IMR-90 (cell line): ENCODE measurements at regions of chr13 and their contacts with region 1.

Region 1: GRCh38 chr13:42110410-42111155 is 62.1 kb downstream of the DGKH start:
- DNase-seq: peak; percentile 82
- ATAC-seq: peak; percentile 67
- H3K4me3 ChIP-seq: no peak overlapping the region
- H3K27ac ChIP-seq: no peak overlapping the region
- H3K4me1 ChIP-seq: peaks cover 3% of the 10 kb centered on the region; the same call in 1 of the 2 replicates
- H3K27me3 ChIP-seq: no peaks in the 10 kb centered on the region
- CTCF ChIP-seq: peak; percentile 84
- POLR2A ChIP-seq: no peak
- RAD21 ChIP-seq: peak; percentile 88

Region 2: GRCh38 chr13:41384755-41385503 is 725.7 kb before region 1 on chr13:
- CTCF ChIA-PET with region 1: interaction called, 3 read pairs
- POLR2A ChIA-PET with region 1: no interaction called
- dilution Hi-C with region 1: no loop called
- in situ Hi-C with region 1: loop called (anchors 10 kb)
- intact Hi-C with region 1: no loop called
- DNase-seq: peak; percentile 15
- ATAC-seq: no peak
- H3K4me3 ChIP-seq: no peak overlapping the region
- H3K27ac ChIP-seq: no peak overlapping the region
- H3K4me1 ChIP-seq: peaks cover 3% of the 10 kb centered on the region; the same call in 1 of the 2 replicates
- H3K27me3 ChIP-seq: no peaks in the 10 kb centered on the region
- CTCF ChIP-seq: peak; percentile 47
- POLR2A ChIP-seq: no peak
- RAD21 ChIP-seq: peak; percentile 47; the same call in 1 of the 2 replicates

Region 3: DNA sequence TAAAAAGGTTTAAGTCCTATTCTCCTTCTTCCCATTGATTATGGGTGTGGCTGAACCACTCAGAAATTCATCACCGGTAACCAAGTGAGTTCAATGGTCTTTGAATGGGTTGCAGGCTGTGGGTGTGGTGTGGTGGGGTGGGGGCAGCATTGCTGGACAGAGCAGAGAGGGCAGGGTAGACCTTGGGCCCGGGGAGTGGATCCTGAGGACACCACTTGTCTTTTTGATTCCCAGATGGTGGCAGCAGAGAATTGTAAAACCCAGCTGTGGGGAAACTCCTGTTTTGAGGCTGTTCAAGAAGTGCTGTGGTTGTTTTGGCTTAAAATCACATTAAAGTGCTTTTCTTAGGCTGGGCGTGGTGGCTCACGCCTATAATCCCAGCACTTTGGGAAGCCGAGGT is 699.1 kb before region 1 on chr13:
- CTCF ChIA-PET with region 1: interaction called, 3 read pairs
- POLR2A ChIA-PET with region 1: no interaction called
- dilution Hi-C with region 1: no loop called
- in situ Hi-C with region 1: no loop called
- intact Hi-C with region 1: loop called (anchors 2 kb)
- DNase-seq: peak; percentile 71
- ATAC-seq: peak; percentile 98
- H3K4me3 ChIP-seq: no peak overlapping the region
- H3K27ac ChIP-seq: no peak overlapping the region
- H3K4me1 ChIP-seq: no peaks in the 10 kb centered on the region
- H3K27me3 ChIP-seq: no peaks in the 10 kb centered on the region
- CTCF ChIP-seq: peak; percentile 67
- POLR2A ChIP-seq: no peak
- RAD21 ChIP-seq: peak; percentile 78

Region 4: DNA sequence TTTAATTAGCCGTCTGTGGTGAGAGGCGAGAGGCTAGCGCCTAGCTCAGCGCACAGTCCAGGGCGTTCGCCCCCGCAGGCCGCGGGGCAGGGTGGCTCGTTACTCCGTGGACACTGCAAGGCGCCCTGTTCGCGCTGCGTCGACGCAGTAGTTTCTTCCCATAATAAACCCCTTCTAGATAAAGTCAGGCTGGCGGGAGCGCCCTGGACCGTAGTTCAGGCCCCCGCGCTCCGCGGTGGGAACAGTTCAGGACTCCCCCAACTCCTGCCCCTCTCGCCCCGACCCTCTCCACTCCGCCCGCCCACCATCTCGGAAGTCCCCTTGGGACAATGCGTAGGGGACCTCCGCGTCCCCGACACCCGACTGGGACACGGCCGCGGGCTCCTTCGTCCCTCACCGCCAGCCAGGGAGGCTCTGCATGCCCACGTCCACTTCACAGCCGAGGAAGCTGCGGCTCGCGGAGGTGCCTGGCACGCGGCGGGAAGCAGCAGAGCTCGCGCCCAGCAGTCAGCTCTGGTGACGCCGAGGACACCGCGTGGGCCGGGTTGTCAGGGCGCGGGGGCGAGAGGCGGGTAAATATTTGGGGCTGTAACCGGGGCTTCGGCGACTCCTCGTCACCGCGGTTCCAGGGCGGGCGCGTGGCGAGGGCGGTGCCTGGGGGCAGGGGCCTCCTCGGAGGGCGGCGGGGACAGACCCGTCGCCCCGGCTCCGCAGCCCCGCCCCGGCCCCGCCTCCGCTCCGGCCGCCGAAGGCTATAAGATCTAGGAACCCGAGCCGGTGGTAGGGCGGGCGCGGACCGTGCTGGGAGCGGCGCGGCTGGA is 653.6 kb before region 1 on chr13 and contains the start of gene RGCC:
- CTCF ChIA-PET with region 1: no interaction called
- POLR2A ChIA-PET with region 1: no interaction called
- dilution Hi-C with region 1: no loop called
- in situ Hi-C with region 1: no loop called
- intact Hi-C with region 1: loop called (anchors 5 kb)
- DNase-seq: peak; percentile 49
- ATAC-seq: peak; percentile 92
- H3K4me3 ChIP-seq: peak within 1 kb of the TSS; percentile 81
- H3K27ac ChIP-seq: peak within 1 kb of the TSS; percentile 45
- H3K4me1 ChIP-seq: peaks cover 6% of the 10 kb centered on the region
- H3K27me3 ChIP-seq: peaks cover 10% of the 10 kb centered on the region
- CTCF ChIP-seq: no peak
- POLR2A ChIP-seq: no peak
- RAD21 ChIP-seq: no peak
- total RNA-seq, gene RGCC: 6.1 and 7.5 TPM in 2 replicates

Region 5: GRCh38 chr13:41905600-41906254 is 204.9 kb before region 1 on chr13:
- CTCF ChIA-PET with region 1: no interaction called
- POLR2A ChIA-PET with region 1: no interaction called
- dilution Hi-C with region 1: no loop called
- in situ Hi-C with region 1: loop called (anchors 10 kb)
- intact Hi-C with region 1: loop called (anchors 5 kb)
- DNase-seq: peak; percentile 48
- ATAC-seq: peak; percentile 67
- H3K4me3 ChIP-seq: no peak overlapping the region
- H3K27ac ChIP-seq: no peak overlapping the region
- H3K4me1 ChIP-seq: no peaks in the 10 kb centered on the region
- H3K27me3 ChIP-seq: no peaks in the 10 kb centered on the region
- CTCF ChIP-seq: peak; percentile 51
- POLR2A ChIP-seq: no peak
- RAD21 ChIP-seq: peak; percentile 77

Region 6: GRCh38 chr13:42333613-42334328 is 223.2 kb after region 1 on chr13:
- CTCF ChIA-PET with region 1: no interaction called
- POLR2A ChIA-PET with region 1: no interaction called
- dilution Hi-C with region 1: no loop called
- in situ Hi-C with region 1: no loop called
- intact Hi-C with region 1: no loop called
- DNase-seq: peak; percentile 22
- ATAC-seq: peak; percentile 75
- H3K4me3 ChIP-seq: no peak overlapping the region
- H3K27ac ChIP-seq: no peak overlapping the region
- H3K4me1 ChIP-seq: no peaks in the 10 kb centered on the region
- H3K27me3 ChIP-seq: peaks cover 10% of the 10 kb centered on the region
- CTCF ChIP-seq: peak; percentile 31; the same call in 1 of the 2 replicates
- POLR2A ChIP-seq: no peak
- RAD21 ChIP-seq: peak; percentile 51